Left ventricle myocardium inferior (tissue), 1 donor: ENCODE measurements at regions of chr12 and their contacts with region 1.

Region 1: DNA sequence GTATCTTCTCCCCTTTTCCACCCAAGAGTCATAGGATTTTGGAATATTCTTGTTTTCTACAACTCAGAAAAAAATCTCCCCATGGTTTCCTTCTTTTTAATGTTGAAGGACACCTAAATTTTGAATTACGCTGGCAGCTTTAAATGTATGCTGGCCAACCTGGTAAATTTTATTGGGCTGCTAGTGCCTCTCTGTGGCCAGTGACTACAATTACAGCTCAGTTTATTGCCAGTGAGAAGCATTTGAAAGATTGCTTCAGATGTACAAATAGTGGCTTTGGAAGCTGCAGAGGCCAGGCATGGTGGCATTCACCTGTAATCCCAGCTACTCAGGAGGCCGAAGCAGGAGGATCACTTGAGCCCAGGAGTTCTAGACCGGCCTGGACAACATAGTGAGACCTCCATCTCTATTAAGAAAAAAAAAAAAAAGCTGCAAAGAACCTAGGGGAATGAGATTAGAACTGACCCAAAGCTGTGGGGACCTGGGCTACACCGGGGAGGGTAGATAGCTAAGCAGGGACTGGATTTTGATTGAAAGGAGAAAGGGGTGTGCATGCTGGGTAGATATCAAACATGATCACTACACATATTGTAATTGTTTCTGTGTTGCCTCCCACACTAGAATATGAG is 7.6 kb upstream of the RAB21 start:
- DNase-seq: no peak
- H3K4me3 ChIP-seq: no peak overlapping the region
- H3K27ac ChIP-seq: no peak overlapping the region
- H3K4me1 ChIP-seq: no peaks in the 10 kb centered on the region
- H3K27me3 ChIP-seq: peaks cover 17% of the 10 kb centered on the region
- CTCF ChIP-seq: peak; percentile 81

Region 2: GRCh38 chr12:71415336-71416231 is 331.5 kb before region 1 on chr12:
- intact Hi-C with region 1: loop called (anchors 10 kb)
- DNase-seq: no peak
- H3K4me3 ChIP-seq: no peak overlapping the region
- H3K27ac ChIP-seq: no peak overlapping the region
- H3K4me1 ChIP-seq: no peaks in the 10 kb centered on the region
- H3K27me3 ChIP-seq: no peaks in the 10 kb centered on the region
- CTCF ChIP-seq: peak; percentile 78